HCT116 (cell line): ENCODE measurements at regions of chr6 and their contacts with region 1.

Region 1: DNA sequence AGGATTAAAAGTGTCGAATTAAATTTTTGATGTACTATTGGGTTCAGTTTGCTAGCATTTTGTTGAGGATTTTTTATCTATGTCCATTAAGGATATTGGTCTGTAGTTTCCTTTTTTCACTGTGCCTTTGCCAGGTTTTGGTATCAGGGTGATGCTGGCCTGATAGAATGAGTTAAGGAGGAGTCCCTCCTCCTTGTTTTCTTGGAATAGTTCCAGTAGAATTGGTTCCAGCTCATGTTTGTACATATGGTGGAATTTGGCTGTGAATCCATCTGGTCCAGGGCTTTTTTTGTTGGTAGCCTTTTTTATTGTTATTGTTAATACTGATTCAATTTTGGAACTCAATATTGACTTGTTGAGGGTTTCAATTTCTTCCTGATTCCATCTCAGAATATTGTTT is 141.8 kb downstream of the SIM1 start:
- DNase-seq: no peak
- ATAC-seq: no peak
- H3K4me3 ChIP-seq: no peak overlapping the region
- H3K27ac ChIP-seq: no peak overlapping the region
- H3K4me1 ChIP-seq: no peaks in the 10 kb centered on the region
- H3K27me3 ChIP-seq: no peaks in the 10 kb centered on the region
- CTCF ChIP-seq: no peak
- POLR2A ChIP-seq: no peak
- RAD21 ChIP-seq: no peak

Region 2: GRCh38 chr6:100657678-100658330 is 334.9 kb after region 1 on chr6:
- CTCF ChIA-PET with region 1: no interaction called
- POLR2A ChIA-PET with region 1: no interaction called
- RAD21 ChIA-PET with region 1: no interaction called
- intact Hi-C with region 1: loop called (anchors 5 kb)
- DNase-seq: no peak
- ATAC-seq: no peak; the same call in 1 of the 2 replicates
- H3K4me3 ChIP-seq: no peak overlapping the region
- H3K27ac ChIP-seq: no peak overlapping the region
- H3K4me1 ChIP-seq: no peaks in the 10 kb centered on the region
- H3K27me3 ChIP-seq: no peaks in the 10 kb centered on the region
- CTCF ChIP-seq: peak; percentile 48 to 99 (median 86); a peak in 5 of 6 replicates
- POLR2A ChIP-seq: no peak
- RAD21 ChIP-seq: peak; percentile 81